ENCODE measurements at regions of chr1 and their contacts with region 1.

Region 1: DNA sequence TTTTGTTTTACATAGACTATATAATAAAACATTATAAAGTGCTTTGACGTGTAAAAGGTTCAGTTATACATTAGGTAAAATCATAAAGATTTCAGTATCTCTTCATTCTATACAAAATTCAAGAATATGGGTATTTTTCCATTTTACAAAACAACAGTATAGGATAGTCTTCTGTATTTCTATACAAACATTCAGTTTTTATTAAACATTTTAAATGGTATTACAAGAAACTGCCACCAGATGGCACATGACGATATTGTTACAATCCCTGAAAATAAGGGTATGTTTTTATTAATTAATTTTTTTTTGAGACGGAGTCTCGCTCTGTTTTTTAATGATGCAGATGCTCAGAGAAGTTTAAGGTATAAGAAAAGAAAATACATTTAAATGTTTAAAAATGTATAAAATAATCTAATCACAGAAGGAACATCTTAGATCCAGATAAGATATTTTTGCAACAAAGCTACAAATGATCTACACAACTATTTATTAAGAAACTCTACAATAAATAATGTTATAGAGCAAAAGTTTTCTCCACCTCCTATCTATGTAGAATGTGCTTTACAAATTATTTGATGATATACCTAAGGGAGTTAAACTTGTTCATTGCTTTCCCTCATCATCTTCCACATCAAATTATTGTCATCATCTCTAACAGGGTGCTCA is 23.5 kb upstream of the RSBN1 start:
- DNase-seq: peak; percentile 36
- ATAC-seq: no peak
- H3K4me3 ChIP-seq: no peak overlapping the region
- H3K27ac ChIP-seq: no peak overlapping the region
- H3K4me1 ChIP-seq: no peaks in the 10 kb centered on the region
- H3K27me3 ChIP-seq: no peaks in the 10 kb centered on the region
- CTCF ChIP-seq: peak; percentile 31 to 73 (median 52); a peak in 3 of 6 replicates
- POLR2A ChIP-seq: no peak
- RAD21 ChIP-seq: peak; percentile 82

Region 2: DNA sequence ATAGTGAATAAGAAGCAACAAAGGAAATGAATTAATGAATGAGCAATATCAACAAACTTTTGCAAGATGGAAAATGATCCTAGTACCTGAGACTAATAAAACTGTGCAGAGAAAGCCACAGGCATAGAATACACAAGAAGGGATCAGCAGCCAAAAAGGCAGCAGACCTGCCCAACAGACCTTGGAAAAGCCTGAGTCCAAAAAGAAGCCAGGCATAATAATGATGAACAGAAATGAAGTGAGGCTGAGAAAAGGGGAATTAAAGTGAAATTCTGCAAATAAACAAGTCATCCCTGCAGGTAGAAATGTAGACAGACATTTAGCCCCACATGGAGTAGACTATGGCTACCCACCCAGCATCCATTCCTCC is 66.2 kb before region 1 on chr1:
- CTCF ChIA-PET with region 1: no interaction called
- POLR2A ChIA-PET with region 1: no interaction called
- RAD21 ChIA-PET with region 1: no interaction called
- intact Hi-C with region 1: no loop called
- DNase-seq: no peak
- ATAC-seq: no peak
- H3K4me3 ChIP-seq: no peak overlapping the region
- H3K27ac ChIP-seq: no peak overlapping the region
- H3K4me1 ChIP-seq: no peaks in the 10 kb centered on the region
- H3K27me3 ChIP-seq: no peaks in the 10 kb centered on the region
- CTCF ChIP-seq: no peak
- POLR2A ChIP-seq: no peak
- RAD21 ChIP-seq: no peak

Region 3: GRCh38 chr1:113963281-113963906 is 127.6 kb after region 1 on chr1:
- CTCF ChIA-PET with region 1: interaction called, 10 read pairs
- POLR2A ChIA-PET with region 1: no interaction called
- RAD21 ChIA-PET with region 1: no interaction called
- intact Hi-C with region 1: loop called (anchors 10 kb)
- DNase-seq: no peak
- ATAC-seq: no peak
- H3K4me3 ChIP-seq: no peak overlapping the region
- H3K27ac ChIP-seq: no peak overlapping the region
- H3K4me1 ChIP-seq: no peaks in the 10 kb centered on the region
- H3K27me3 ChIP-seq: no peaks in the 10 kb centered on the region
- CTCF ChIP-seq: no peak
- POLR2A ChIP-seq: no peak
- RAD21 ChIP-seq: peak; percentile 36; the same call in 1 of the 2 replicates

Region 4: GRCh38 chr1:114956564-114956963 is 1120.8 kb after region 1 on chr1:
- CTCF ChIA-PET with region 1: interaction called, 3 read pairs
- POLR2A ChIA-PET with region 1: no interaction called
- RAD21 ChIA-PET with region 1: no interaction called
- intact Hi-C with region 1: loop called (anchors 10 kb)
- DNase-seq: peak; percentile 21
- ATAC-seq: peak; percentile 64
- H3K4me3 ChIP-seq: no peak overlapping the region
- H3K27ac ChIP-seq: no peak overlapping the region
- H3K4me1 ChIP-seq: no peaks in the 10 kb centered on the region
- H3K27me3 ChIP-seq: no peaks in the 10 kb centered on the region
- CTCF ChIP-seq: peak; percentile 24 to 53 (median 46); a peak in 5 of 6 replicates
- POLR2A ChIP-seq: no peak
- RAD21 ChIP-seq: peak; percentile 72